Activated T-helper 1 cell treated with anti-CD3 and anti-CD28 coated beads, Interleukin-12 subunit alpha, Interleukin-12 subunit beta, Interleukin-2, Interleukin-4 antibody, amounts not matched to agents 30 ng/mL and 10 ng/mL and 1 ng/mL, durations not matched to agents 14 hours and 24 hours and 36 hours (primary cell): ENCODE measurements at regions of chr4 and their contacts with region 1.

Region 1: DNA sequence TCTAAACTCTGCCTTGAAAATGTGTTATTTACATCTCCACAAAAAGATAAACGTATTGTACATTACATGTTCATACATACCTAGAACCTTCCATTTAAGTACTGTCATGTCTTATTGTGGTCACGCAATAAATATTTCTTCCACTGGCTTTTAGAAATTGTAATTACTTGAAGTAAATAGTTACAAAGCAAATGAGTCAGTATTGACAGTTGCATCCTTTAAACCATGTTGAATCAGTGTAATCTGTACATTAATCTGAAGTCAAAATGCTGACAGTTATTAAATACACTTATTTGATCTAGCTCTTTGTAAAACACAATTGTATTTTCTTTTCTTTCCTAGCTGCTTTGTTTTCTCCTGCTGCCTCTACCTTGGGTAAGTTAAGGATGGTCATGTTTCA is 446.7 kb downstream of the EPHA5 start:
- DNase-seq: no peak
- H3K4me3 Mint-ChIP-seq: no peak overlapping the region
- H3K27ac Mint-ChIP-seq: no peak overlapping the region
- H3K4me1 Mint-ChIP-seq: no peaks in the 10 kb centered on the region
- H3K27me3 Mint-ChIP-seq: no peaks in the 10 kb centered on the region

Region 2: DNA sequence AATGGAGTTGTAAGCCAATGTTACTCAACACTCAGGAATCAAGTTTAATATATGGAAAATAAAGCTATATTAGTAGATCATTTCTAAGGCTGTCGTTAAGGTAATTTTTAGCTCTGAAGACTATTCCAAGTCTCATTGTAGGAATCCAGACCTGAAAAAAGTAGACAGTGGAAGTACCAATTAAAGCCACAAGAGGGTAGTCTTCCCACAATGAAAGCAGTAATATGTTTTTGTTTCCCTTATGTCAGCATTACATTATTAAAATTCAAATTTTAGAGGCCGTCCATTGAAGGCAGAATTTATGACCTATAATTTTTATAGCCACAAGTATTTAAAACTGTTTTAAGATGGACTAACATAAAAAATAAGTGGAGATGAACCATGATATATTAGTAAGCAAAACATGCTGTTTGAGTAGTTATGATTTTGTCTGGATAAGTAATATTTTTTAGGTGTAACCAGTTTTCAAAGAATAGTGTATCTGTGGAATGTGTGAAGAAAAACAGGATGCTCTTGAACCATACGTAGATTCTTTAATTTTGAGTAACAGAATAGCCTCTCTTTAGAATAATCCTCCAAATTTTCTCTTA is 441.8 kb before region 1 on chr4:
- intact Hi-C with region 1: loop called (anchors 10 kb)
- DNase-seq: no peak
- H3K4me3 Mint-ChIP-seq: no peak overlapping the region
- H3K27ac Mint-ChIP-seq: no peak overlapping the region
- H3K4me1 Mint-ChIP-seq: no peaks in the 10 kb centered on the region
- H3K27me3 Mint-ChIP-seq: no peaks in the 10 kb centered on the region

Region 3: DNA sequence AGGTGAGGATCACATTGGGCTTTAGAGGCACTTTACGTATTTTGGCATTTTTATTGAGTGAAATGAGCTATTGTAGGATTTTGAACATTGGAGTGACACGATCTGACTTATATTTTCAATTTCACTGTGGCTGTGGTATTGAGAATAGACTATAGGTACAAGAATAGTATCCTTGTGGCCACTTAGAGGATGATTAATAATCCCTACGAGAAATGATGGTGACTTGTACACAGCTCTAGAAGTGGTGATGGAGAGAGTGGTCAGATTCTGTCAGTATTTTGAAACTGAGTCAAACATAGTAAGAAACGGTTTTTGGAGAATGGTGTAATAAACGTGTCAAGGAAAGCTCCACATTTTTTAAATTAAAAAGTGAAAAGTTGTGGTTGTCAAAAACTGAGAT is 48.0 kb before region 1 on chr4:
- intact Hi-C with region 1: no loop called
- DNase-seq: no peak
- H3K4me3 Mint-ChIP-seq: no peak overlapping the region
- H3K27ac Mint-ChIP-seq: no peak overlapping the region
- H3K4me1 Mint-ChIP-seq: no peaks in the 10 kb centered on the region
- H3K27me3 Mint-ChIP-seq: no peaks in the 10 kb centered on the region